ENCODE measurements at regions of chr6 and their contacts with region 1.

Region 1: DNA sequence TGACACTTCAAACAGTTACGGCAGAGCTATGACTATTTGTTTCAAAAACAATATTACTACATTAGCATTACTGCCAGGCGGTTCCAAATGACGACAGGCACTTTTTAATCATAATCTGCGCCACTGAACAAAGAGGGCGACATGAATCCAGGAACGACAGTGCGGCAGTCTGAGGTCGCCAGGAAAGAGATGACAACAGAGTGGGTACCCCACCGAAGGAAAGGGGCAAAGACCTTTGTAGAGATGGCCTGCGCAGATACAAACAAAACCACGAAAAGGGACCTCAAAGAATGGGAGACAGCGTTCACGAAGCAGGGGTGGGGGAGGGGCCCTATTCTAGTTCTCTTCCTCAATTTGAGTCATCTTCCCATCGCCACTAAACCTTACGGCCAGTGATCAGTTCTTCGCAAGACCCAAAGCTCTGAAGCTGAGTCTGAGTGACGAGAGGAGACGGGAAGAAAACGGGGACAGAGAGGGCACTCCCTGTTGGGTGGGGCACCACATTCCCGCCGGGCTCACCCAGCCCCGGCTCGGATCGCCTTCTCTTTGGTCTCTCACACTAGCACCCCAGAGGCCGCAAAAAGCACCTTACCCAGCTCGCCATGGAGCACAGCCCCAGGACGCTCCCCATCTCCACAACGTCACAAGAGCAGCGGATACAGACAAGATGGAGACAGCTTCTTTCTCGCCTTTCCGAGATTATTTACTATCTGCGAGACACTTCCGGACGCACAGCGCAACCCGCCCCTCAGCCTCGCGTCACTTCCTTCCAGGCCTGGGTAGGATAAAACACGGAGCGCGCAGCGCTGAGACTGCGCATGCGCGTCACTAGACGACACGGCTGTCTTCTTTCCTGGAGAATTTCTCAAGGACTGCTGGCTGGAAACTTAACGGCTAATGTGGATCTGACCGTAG is at the start of gene SERINC1:
- DNase-seq: peak; percentile 94
- H3K4me3 ChIP-seq: peak within 1 kb of the TSS; percentile 88
- H3K27ac ChIP-seq: peak within 1 kb of the TSS; percentile 59
- H3K4me1 ChIP-seq: peaks cover 13% of the 10 kb centered on the region
- CTCF ChIP-seq: no peak
- total RNA-seq, gene SERINC1: 12.7 and 12.8 TPM in 2 replicates

Region 2: GRCh38 chr6:122399384-122400158 is 71.8 kb before region 1 on chr6 and contains the start of gene HSF2:
- CTCF ChIA-PET with region 1: no interaction called
- POLR2A ChIA-PET with region 1: interaction called, 7 read pairs
- intact Hi-C with region 1: loop called (anchors 1 kb)
- DNase-seq: peak; percentile 97
- H3K4me3 ChIP-seq: peak within 1 kb of the TSS; percentile 100
- H3K27ac ChIP-seq: peak within 1 kb of the TSS; percentile 67
- H3K4me1 ChIP-seq: peaks cover 22% of the 10 kb centered on the region
- CTCF ChIP-seq: no peak
- total RNA-seq, gene HSF2: 17.4 and 29.6 TPM in 2 replicates

Measured in OCI-LY7 (cell line).